AG04449 (cell line): ENCODE measurements at regions of chr1 and their contacts with region 1.

Region 1: DNA sequence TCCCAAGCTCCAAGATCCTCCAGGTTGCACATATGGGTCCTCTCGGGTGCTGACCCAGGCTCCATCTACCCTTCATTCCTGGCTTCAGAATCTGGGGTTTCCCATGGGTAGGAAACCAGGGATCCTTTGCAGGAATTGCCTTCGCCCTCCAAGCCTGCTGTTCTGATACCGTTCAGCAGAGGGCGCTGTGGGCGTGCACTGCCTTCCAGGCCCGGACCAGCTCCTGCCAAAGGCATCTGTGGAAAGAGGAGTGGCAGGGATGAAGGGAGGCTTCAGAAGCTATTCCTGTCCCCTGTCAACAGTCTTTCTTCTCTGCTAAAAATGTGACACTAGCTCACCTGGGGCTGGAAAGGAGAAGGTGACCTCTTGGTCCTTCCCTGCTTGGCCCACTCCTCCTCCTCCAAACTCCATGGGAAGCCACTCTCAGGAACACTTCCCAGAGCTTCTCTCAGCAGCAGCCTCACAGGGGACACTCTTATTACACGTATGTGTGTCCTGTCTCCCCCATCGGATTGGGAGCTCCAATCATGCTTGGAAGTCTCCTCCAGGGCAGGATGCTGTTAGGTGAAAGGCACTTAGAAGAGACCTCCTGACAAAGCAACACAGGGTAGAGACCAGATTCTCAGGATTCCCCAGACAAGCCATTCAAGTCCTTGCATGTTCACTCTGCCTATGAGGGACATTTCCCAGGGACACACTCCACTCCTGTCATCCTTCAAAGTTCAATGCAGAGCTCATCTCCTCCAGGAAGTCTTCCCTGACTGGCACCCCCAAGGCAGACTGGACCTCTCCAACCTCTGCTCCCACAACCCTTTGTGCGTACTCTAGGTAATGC is 71.3 kb downstream of the VWA5B1 start:
- DNase-seq: no peak
- H3K4me3 ChIP-seq: no peak overlapping the region
- CTCF ChIP-seq: peak; percentile 91

Region 2: GRCh38 chr1:20165522-20165951 is 196.5 kb before region 1 on chr1:
- CTCF ChIA-PET with region 1: no interaction called
- POLR2A ChIA-PET with region 1: no interaction called
- DNase-seq: no peak
- H3K4me3 ChIP-seq: no peak overlapping the region
- CTCF ChIP-seq: peak; percentile 10

Region 3: GRCh38 chr1:20390589-20391331 is 28.7 kb after region 1 on chr1:
- CTCF ChIA-PET with region 1: interaction called, 11 read pairs
- POLR2A ChIA-PET with region 1: no interaction called
- DNase-seq: no peak
- H3K4me3 ChIP-seq: no peak overlapping the region
- CTCF ChIP-seq: no peak

Region 4: DNA sequence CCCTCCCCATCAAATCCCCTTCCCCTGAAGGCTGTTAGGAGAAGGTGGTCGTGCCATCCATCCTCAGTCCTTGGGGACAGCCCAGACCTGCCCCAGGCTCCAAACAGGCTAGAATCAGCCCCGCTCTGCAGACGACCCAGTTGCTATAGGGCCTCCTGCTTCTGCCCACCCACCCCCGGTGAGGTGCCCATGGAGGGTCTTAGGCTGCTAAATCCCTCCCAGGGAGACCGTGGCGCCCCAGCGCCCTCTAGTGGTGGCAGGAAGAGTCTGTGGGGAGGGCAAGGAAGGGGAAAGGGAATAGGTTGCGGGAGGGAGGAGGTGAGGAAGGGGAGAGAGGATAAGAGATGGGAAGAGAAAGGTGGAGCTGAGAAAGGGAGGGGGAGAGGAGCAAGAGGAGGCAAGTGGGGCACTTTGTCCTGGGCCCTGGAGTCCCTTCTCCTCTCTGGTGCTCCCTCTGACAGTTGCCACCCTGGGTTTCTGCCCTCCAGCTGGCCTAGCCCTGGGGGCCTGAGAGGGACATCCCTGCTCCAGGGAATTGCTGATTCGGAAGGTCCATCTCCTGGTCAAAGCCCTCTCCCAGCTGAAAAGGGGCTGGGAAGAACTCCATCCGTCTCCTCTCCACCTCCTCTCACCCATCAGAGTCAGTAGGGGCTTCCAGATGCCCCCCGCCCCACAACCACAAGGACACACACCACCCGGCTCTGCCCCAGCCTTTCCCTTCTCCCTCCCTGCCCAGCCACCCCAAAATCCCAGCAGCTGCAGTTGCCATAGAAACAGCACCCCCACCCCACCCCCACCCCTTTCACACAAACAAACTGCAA is 68.5 kb after region 1 on chr1:
- CTCF ChIA-PET with region 1: interaction called, 38 read pairs
- POLR2A ChIA-PET with region 1: no interaction called
- DNase-seq: no peak
- H3K4me3 ChIP-seq: no peak overlapping the region
- CTCF ChIP-seq: peak; percentile 91

Region 5: DNA sequence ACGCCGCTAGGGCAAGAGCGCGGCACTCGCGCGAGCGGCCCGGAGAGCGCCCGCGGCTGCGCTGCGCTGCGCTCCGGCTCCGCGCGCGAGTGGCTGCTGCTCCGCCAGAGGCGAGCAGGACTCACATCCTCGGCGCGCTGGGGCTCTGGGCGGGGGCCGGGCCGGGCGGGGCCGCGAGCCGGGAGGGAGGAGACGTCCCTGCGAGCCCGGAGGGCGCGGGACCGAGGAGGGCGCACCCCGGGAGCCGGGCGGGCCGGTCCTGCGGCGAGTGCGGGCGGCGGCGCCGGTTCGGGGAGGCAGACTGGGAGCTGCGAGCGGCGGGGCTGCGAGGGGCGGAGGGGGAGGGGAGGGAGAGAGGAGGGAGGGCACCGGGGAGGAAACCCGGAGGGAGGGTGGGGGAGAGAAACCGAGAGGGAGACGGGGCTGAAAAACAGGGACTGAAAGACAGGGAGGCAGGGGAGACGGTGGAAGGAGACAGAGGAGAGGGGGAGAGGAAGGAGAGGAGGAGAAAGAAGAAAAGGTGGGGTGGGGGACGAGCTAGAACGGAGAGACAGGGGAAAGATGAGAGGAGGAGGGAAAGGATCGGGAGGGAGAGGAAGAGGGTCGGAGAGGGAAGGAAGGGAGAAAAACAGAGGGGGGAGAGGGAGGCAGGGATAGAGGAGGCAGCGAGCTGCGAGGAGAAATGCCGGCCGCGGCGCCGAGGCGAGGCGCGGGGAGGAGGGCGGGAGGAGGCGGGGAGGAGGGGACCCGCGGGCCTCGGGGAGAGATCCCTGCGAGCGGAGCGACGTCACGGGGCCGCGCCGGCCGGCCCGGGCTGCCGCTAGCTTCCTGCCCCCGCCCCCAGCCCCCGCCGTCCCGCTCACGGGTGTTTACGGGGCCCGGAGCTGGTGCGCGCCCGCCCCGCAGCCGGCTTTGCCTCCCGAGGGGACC is 123.8 kb after region 1 on chr1 and contains the start of gene CAMK2N1:
- CTCF ChIA-PET with region 1: interaction called, 202 read pairs
- POLR2A ChIA-PET with region 1: no interaction called
- DNase-seq: no peak
- H3K4me3 ChIP-seq: peak within 1 kb of the TSS; percentile 70
- CTCF ChIP-seq: no peak